ENCODE measurements at regions of chr2 and their contacts with region 1.

Region 1: DNA sequence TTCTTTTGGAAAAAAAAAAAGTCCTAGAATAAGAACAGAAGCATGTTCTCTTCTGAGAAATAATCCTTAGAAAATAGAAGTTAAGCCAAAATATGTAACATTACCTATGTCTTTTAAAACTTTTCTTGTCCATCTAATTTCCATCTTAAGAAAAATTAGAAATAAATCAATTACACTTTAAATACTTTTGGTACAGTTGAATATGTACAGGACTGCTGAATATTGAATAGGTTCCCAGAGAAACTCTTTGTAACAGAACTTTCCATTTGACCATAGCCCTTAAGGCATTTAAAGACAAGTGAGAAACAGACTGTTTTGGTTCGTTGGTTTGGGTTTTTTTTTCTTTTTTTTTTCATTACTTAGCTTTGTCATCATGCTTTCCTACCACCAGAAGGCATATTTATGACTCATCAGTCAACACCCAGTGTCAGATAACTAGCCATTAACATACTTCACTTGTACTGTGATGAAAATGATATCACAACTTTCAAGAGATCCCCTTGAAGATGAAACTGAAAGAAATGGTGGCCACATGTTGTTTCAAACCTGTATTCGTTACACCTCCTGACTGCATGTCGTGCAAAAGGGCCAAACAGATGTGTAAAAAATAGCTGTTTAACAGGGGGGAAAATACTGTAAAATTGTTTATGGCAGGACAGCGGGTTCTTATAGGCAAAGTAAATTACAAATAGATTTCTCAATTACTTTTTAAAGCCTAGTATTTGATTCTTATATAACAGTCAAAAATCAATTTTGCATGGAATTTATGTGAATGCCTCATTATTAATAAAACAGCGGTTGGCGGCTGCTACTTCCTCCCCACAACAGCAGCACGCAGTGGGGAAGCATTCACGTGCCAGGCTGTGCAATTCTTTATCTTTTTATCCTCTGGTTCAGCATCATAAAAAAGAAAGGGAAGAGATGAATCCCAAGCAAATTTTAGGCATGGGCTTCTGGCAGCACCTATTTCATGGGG is 280.7 kb upstream of the HNRNPA3 start:
- DNase-seq: no peak
- H3K4me3 ChIP-seq: no peak overlapping the region
- H3K27ac ChIP-seq: no peak overlapping the region
- H3K4me1 ChIP-seq: no peaks in the 10 kb centered on the region
- H3K27me3 ChIP-seq: no peaks in the 10 kb centered on the region
- CTCF ChIP-seq: no peak
- EP300 ChIP-seq: no peak
- POLR2A ChIP-seq: no peak

Region 2: GRCh38 chr2:176636389-176636788 is 295.5 kb before region 1 on chr2:
- in situ Hi-C with region 1: no loop called
- intact Hi-C with region 1: no loop called
- DNase-seq: no peak
- H3K4me3 ChIP-seq: peak overlapping the region in 1 of 4 donors; percentile 78
- H3K27ac ChIP-seq: peak overlapping the region in 1 of 4 donors; percentile 85
- H3K4me1 ChIP-seq: peaks cover 0 to 9% (median 5%) of the 10 kb centered on the region in 4 donors
- H3K27me3 ChIP-seq: peaks cover 39% of the 10 kb centered on the region
- CTCF ChIP-seq: no peak
- EP300 ChIP-seq: no peak
- POLR2A ChIP-seq: no peak

Region 3: GRCh38 chr2:176902454-176902853 is 29.4 kb before region 1 on chr2:
- in situ Hi-C with region 1: no loop called
- intact Hi-C with region 1: no loop called
- DNase-seq: no peak
- H3K4me3 ChIP-seq: no peak overlapping the region
- H3K27ac ChIP-seq: no peak overlapping the region
- H3K4me1 ChIP-seq: no peaks in the 10 kb centered on the region
- H3K27me3 ChIP-seq: no peaks in the 10 kb centered on the region
- CTCF ChIP-seq: no peak
- EP300 ChIP-seq: no peak
- POLR2A ChIP-seq: no peak

Region 4: DNA sequence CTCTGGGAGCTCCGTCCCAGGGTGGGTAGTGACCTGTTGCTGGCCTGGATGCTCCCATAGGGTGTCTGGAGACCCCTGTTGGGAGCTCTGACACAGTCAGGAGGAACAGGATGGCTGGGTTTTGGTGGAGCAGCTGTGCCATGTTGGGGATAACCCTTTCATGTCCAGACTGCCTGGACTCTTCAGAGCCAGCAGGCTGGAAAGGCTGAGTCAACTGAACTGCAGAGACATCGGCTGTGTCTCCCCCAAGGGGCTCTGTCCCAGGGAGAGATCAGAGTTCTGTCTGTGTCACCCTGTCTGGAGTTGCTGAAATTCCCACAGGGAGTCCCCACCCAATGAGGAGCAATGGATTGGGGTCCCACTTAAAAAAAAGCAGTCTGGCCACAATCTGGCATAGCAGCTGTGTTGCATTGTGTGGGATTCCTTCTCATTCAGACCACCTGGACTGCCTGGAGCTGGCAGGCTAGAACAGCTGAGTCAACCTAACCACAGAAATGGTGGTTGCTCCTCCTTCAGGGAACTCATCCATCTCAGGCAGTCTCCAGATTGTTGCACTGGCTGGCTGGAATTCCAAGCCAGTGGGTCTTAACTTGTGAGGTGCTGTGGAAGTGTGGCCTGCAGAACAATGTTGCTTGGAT is 497.9 kb after region 1 on chr2:
- in situ Hi-C with region 1: no loop called
- intact Hi-C with region 1: loop called (anchors 5 kb)
- DNase-seq: no peak
- H3K4me3 ChIP-seq: no peak overlapping the region
- H3K27ac ChIP-seq: no peak overlapping the region
- H3K4me1 ChIP-seq: no peaks in the 10 kb centered on the region
- H3K27me3 ChIP-seq: no peaks in the 10 kb centered on the region
- CTCF ChIP-seq: no peak
- EP300 ChIP-seq: no peak
- POLR2A ChIP-seq: no peak

Measured in transverse colon (tissue), 4 donors.